Cardiac septum (tissue), 1 donor: ENCODE measurements at regions of chr2 and their contacts with region 1.

Region 1: GRCh38 chr2:3423492-3424175 is 44.1 kb downstream of the TRAPPC12 start:
- DNase-seq: peak; percentile 83

Region 2: GRCh38 chr2:3303583-3304406 is 119.8 kb before region 1 on chr2:
- intact Hi-C with region 1: no loop called
- DNase-seq: peak; percentile 94

Region 3: DNA sequence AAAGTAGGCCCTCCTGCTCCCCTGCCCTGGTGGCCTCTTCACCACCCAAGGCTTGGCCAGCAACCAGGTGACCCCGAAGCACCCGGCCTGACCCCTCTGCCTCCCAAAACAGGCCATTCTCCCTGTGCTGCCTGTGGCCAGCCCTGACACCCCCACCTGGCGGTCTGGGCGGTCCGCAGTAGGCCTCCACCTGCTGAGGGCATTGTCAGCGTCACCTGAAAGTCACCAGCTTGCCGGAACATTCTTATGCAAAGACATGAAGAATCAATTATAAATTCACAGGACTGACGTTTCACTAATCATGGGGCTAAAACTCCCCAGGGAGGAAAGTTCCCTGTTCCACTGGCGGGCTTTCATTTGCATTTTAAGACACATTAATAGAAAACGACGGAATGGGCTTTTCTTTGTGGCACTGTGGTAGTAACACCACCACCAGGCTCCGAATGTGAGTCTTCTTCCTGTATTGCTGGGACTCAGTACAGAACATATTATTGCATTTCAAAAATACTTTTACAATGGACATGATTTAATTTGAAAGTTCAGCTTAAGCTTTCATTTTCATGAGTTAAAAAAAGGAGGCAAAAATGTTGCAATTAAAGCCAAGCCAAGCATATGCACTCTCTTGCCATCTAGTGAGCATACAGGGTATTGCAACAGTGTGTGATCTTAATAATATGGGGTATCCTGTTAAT is 38.3 kb after region 1 on chr2:
- intact Hi-C with region 1: loop called (anchors 2 kb)
- DNase-seq: peak; percentile 63

Region 4: GRCh38 chr2:3604991-3605961 is 181.6 kb after region 1 on chr2:
- intact Hi-C with region 1: no loop called
- DNase-seq: no peak

Region 5: GRCh38 chr2:3651691-3652648 is 228.3 kb after region 1 on chr2:
- intact Hi-C with region 1: loop called (anchors 5 kb)
- DNase-seq: no peak